Heart left ventricle (tissue), 16 donors: ENCODE measurements at regions of chr6 and their contacts with region 1.

Region 1: DNA sequence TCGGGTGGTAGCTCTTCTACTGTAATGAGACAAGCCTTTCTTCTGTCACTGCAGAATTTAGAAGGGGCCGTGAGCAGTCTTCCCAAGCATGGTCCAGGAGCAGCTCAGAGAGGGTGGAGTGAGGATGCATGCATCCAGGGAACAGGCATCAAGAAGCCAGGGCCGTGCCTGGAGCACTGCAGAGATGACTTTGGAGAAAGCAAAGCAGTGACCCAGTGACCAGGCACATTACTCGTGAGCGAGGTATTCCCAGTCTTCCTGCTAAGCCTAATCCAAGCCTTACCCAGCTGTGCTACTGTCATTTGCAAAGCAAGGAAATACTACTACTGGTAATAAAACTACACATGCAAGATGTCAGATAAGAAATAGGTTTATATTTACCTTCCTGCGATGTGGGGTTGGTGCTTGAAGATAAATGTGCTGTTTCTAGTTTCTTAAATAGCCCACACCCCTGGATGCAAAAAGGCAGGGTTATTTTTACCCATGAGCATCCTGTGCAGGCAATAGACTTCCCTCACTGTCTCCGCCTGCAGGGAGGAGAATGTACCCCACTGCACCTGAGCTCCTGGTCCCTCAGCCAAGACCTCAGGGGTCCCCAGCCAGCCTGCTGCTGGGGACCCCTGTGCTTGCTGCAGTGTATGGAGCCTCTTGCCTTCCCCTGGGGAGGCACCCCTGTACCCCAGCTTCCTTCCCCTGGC is 62.9 kb downstream of the SSR1 start:
- DNase-seq: no peak
- ATAC-seq: no peak
- H3K4me3 ChIP-seq: no peak overlapping the region
- H3K27ac ChIP-seq: no peak overlapping the region
- H3K4me1 ChIP-seq: peaks cover 0 to 44% (median 8%) of the 10 kb centered on the region in 12 donors
- H3K27me3 ChIP-seq: no peaks in the 10 kb centered on the region
- CTCF ChIP-seq: no peak
- POLR2A ChIP-seq: no peak

Region 2: GRCh38 chr6:6676910-6677441 is 573.1 kb before region 1 on chr6:
- intact Hi-C with region 1: loop called in 1 of 10 experiments (anchors 5 kb)
- DNase-seq: peak in 4 of 5 donors; percentile 63 to 75 (median 72)
- ATAC-seq: peak; percentile 73 to 87 (median 86)
- H3K4me3 ChIP-seq: no peak overlapping the region
- H3K27ac ChIP-seq: peak overlapping the region in 11 of 12 donors; percentile 15 to 77 (median 58)
- H3K4me1 ChIP-seq: peaks cover 0 to 45% (median 11%) of the 10 kb centered on the region in 12 donors
- H3K27me3 ChIP-seq: no peaks in the 10 kb centered on the region
- CTCF ChIP-seq: peak; percentile 95 to 99 (median 98)
- POLR2A ChIP-seq: no peak

Region 3: DNA sequence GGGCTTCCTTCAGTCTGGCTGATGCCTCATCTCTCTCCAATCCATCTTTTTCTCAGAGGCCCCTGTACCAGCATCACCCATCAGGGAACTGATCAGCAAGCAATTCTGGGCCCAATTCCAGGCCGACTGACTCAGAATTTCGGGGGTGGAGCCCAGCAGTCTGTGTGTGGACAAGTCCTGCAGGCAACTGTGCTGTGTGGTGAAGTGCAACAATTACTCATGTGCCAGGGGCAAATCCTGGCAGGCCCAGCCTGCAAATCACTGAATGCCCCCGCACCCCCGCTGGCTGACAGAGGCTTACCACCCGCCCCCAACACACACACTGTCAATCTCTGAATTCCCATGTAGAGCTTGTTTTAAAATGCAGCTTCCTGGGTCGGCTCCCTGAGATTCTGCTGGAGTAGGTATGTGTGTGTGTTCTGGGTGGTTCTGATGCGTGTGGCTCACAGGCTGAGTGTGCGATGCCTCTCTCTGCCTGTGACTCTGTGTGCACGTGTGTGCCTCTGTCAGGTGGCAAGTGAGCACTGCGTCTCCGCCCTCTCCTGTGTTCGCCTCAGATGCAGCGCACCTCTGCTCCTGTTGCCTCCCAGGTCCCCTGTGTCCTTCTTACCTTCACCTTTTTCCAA is 17.5 kb after region 1 on chr6:
- intact Hi-C with region 1: no loop called
- DNase-seq: no peak
- ATAC-seq: peak in 3 of 4 donors; percentile 10 to 56 (median 31)
- H3K4me3 ChIP-seq: no peak overlapping the region
- H3K27ac ChIP-seq: no peak overlapping the region
- H3K4me1 ChIP-seq: peaks cover 0 to 27% (median 0%) of the 10 kb centered on the region in 12 donors
- H3K27me3 ChIP-seq: no peaks in the 10 kb centered on the region
- CTCF ChIP-seq: no peak
- POLR2A ChIP-seq: no peak